ENCODE measurements at regions of chr5 and their contacts with region 1.

Region 1: DNA sequence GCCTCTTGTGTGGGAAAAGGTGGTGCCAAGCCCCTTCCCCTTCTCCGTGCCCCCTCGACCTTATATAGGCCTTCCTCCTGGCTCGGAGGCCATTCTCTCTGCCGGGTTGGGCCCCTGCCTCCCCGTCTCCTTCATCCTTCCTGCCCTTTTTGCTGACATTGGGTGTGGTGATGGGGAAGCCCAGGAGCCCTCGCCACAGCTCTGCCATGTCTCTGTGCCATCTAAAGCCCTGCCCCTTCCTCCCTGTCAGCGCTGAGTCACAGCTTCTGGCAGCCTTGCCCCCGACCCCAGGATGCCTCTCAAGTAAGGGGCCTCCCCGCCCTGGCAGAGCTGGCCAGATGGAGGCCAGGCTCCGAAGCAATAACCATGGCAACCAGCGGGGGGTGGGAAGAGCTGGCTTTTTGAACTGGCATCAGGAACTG is 30.4 kb downstream of the JADE2 start:
- DNase-seq: peak; percentile 51 to 95 (median 75)
- ATAC-seq: peak; percentile 91
- H3K4me3 ChIP-seq: no peak overlapping the region
- H3K4me3 Mint-ChIP-seq: peak overlapping the region; percentile 80
- H3K27ac ChIP-seq: peak overlapping the region; percentile 77 to 92
- H3K27ac Mint-ChIP-seq: peak overlapping the region; percentile 95
- H3K4me1 ChIP-seq: peaks cover 50% of the 10 kb centered on the region
- H3K4me1 Mint-ChIP-seq: peaks cover 45% of the 10 kb centered on the region
- H3K27me3 ChIP-seq: no peaks in the 10 kb centered on the region
- H3K27me3 Mint-ChIP-seq: no peaks in the 10 kb centered on the region
- CTCF ChIP-seq: no peak

Region 2: GRCh38 chr5:134509329-134510082 is 46.4 kb before region 1 on chr5:
- CTCF ChIA-PET with region 1: no interaction called
- POLR2A ChIA-PET with region 1: no interaction called
- intact Hi-C with region 1: no loop called
- DNase-seq: no peak
- ATAC-seq: no peak
- H3K4me3 ChIP-seq: no peak overlapping the region
- H3K4me3 Mint-ChIP-seq: no peak overlapping the region
- H3K27ac ChIP-seq: no peak overlapping the region
- H3K27ac Mint-ChIP-seq: no peak overlapping the region
- H3K4me1 ChIP-seq: peaks cover 10% of the 10 kb centered on the region
- H3K4me1 Mint-ChIP-seq: peaks cover 4% of the 10 kb centered on the region
- H3K27me3 ChIP-seq: no peaks in the 10 kb centered on the region
- H3K27me3 Mint-ChIP-seq: no peaks in the 10 kb centered on the region
- CTCF ChIP-seq: no peak

Region 3: DNA sequence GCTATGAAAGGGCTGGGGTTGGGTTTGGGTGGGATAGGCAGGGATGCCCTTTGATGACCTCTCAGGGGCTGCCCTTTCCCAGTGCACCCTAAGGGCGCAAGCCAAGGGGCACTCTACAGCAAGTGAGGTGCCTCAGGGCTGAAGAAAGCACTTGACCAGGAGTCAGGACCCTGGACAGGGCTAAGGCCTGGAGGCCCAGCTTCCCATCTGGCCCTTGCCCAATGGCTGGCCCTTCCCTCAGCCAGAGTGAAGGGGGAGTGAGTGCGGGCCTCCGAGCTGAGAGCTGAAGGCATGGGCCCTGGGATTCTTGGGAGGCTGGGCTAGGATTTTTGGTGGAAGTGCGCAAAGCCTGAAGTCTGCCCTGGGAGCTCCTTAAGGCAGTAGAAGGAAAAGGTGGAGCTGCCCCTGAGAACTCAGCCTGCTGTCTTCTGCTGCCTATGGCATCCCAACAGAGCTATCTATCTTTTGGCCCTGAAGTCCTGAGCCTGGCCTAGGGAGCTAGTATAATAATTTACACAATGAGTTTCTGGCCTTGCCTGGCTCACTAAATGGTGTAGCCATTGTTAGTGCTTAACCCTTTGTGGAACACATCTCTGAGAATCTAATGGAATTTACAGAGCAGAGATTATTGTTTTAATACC is 14.0 kb before region 1 on chr5:
- CTCF ChIA-PET with region 1: interaction called, 10 read pairs
- POLR2A ChIA-PET with region 1: interaction called, 16 read pairs
- intact Hi-C with region 1: no loop called
- DNase-seq: peak in 1 of 14 experiments; percentile 31
- ATAC-seq: no peak
- H3K4me3 ChIP-seq: no peak overlapping the region
- H3K4me3 Mint-ChIP-seq: peak overlapping the region; percentile 42
- H3K27ac ChIP-seq: no peak overlapping the region
- H3K27ac Mint-ChIP-seq: peak overlapping the region; percentile 53
- H3K4me1 ChIP-seq: peaks cover 65% of the 10 kb centered on the region
- H3K4me1 Mint-ChIP-seq: peaks cover 50% of the 10 kb centered on the region
- H3K27me3 ChIP-seq: no peaks in the 10 kb centered on the region
- H3K27me3 Mint-ChIP-seq: no peaks in the 10 kb centered on the region
- CTCF ChIP-seq: no peak

Region 4: DNA sequence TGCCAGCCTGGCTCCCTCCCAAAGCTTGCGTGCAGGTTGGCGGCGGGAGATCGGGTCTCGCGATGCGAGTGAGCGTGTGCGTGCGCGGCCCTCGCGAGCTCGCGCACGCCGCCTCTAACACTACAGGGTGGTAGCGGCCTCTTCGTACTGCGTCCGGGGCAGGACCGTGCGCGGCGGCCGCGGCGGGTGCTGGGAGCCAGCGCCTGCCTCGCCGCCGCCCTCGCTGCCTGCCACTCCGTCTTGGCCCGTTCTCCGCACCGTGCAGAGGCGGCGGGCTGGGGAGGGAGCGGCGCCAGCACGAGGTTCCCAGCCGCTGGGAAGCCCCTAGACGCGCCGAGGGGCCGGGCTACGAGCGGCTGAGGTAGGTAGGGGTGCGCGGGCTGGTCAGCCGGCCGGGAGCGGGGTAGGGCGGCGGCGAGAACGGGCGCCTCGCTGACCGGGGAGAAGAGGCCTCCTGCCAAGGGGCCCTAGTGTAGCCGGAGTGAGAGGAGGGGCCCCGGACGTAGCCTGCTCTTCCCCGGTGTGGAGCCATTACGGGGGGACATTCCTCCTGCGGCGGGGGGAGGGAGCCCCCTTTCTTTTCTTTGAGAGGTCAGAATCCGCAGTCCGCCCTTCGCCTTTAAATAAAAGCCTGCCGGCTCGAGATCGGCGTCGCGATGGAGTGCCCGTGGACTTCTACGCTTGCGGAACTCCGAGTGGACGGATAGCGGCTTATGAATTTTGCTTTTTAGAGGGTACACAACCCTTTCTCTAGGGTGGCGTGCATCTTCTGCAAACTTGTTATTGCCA is 290.1 kb after region 1 on chr5 and contains the start of gene C5orf24:
- CTCF ChIA-PET with region 1: no interaction called
- POLR2A ChIA-PET with region 1: no interaction called
- intact Hi-C with region 1: no loop called
- DNase-seq: peak; percentile 83 to 98 (median 90)
- ATAC-seq: peak; percentile 90
- H3K4me3 ChIP-seq: peak within 1 kb of the TSS; percentile 76
- H3K4me3 Mint-ChIP-seq: peak within 1 kb of the TSS; percentile 86
- H3K27ac ChIP-seq: peak within 1 kb of the TSS; percentile 87
- H3K27ac Mint-ChIP-seq: peak within 1 kb of the TSS; percentile 95
- H3K4me1 ChIP-seq: peaks cover 35% of the 10 kb centered on the region
- H3K4me1 Mint-ChIP-seq: peaks cover 26% of the 10 kb centered on the region
- H3K27me3 ChIP-seq: no peaks in the 10 kb centered on the region
- H3K27me3 Mint-ChIP-seq: no peaks in the 10 kb centered on the region
- CTCF ChIP-seq: no peak
- total RNA-seq, gene C5orf24: 34.6 to 36.5 TPM

Measured in CD4-positive, alpha-beta T cell (primary cell).